Heart right ventricle (tissue), 16 donors: ENCODE measurements at regions of chr6 and their contacts with region 1.

Region 1: DNA sequence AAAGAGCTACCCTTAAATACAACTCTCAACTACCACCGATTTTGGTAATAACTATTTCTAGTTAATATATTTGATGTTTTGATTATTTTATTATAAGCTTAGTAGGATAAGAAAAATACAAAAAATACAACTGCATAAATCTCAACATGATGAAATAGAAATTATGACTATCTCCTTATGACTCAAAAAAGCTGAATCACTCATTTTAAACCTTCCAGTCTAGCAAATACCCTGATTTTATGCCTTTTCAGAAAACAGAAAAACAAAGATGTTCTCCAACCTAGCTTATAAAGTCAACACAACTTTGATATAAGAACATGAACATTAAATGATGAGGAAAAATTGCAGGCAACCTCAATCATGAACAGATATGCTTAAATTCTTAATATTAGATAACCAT is 40.2 kb upstream of the DSE start:
- DNase-seq: no peak
- ATAC-seq: no peak
- H3K4me3 ChIP-seq: no peak overlapping the region
- H3K27ac ChIP-seq: no peak overlapping the region
- H3K4me1 ChIP-seq: peaks cover 3 to 39% (median 29%) of the 10 kb centered on the region in 9 donors
- H3K27me3 ChIP-seq: no peaks in the 10 kb centered on the region
- CTCF ChIP-seq: no peak

Region 2: GRCh38 chr6:115512923-115513322 is 817.6 kb before region 1 on chr6:
- intact Hi-C with region 1: no loop called
- DNase-seq: no peak
- ATAC-seq: no peak
- H3K4me3 ChIP-seq: no peak overlapping the region
- H3K27ac ChIP-seq: no peak overlapping the region
- H3K4me1 ChIP-seq: no peaks in the 10 kb centered on the region
- H3K27me3 ChIP-seq: peaks cover 0 to 5% (median 0%) of the 10 kb centered on the region in 7 donors
- CTCF ChIP-seq: no peak

Region 3: DNA sequence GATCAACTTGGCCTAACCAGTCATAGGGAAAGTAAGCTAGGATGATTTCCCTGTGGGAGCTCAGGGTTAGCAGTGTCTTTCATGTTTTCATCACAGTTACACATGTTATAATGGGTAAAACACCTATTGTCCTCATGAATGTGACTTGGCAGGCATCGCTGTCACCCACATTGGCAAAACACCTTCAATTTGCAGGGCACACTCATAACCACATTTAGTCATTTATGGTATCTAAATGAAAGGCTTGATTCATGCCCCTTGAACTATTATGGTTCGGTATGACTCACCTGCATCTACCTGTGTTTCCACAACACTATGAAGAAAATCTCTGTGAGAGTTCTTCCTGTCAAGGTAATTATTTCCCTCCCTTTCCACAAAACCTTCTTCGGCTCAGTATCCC is 319.0 kb before region 1 on chr6:
- intact Hi-C with region 1: no loop called
- DNase-seq: no peak
- ATAC-seq: no peak
- H3K4me3 ChIP-seq: no peak overlapping the region
- H3K27ac ChIP-seq: peak overlapping the region in 2 of 10 donors; percentile 22 to 26
- H3K4me1 ChIP-seq: peaks cover 0 to 63% (median 32%) of the 10 kb centered on the region in 9 donors
- H3K27me3 ChIP-seq: no peaks in the 10 kb centered on the region
- CTCF ChIP-seq: no peak

Region 4: GRCh38 chr6:116371120-116371917 is 40.8 kb after region 1 on chr6:
- intact Hi-C with region 1: loop called in 1 of 10 experiments (anchors 5 kb)
- DNase-seq: peak; percentile 59 to 76
- ATAC-seq: peak; percentile 76 to 88 (median 79)
- H3K4me3 ChIP-seq: peak overlapping the region; percentile 50 to 95 (median 84)
- H3K27ac ChIP-seq: peak overlapping the region; percentile 63 to 96 (median 90)
- H3K4me1 ChIP-seq: peaks cover 0 to 55% (median 18%) of the 10 kb centered on the region in 9 donors
- H3K27me3 ChIP-seq: no peaks in the 10 kb centered on the region
- CTCF ChIP-seq: no peak